ENCODE measurements at regions of chr17 and their contacts with region 1.

Region 1: GRCh38 chr17:16363749-16364536 is 10.7 kb upstream of the CENPV start:
- DNase-seq: peak; percentile 48 to 69
- ATAC-seq: peak; percentile 82 to 91
- H3K4me3 ChIP-seq: no peak overlapping the region
- H3K27ac ChIP-seq: peak overlapping the region in 3 of 4 donors; percentile 25 to 56 (median 39)
- H3K4me1 ChIP-seq: peaks cover 0 to 6% of the 10 kb centered on the region in 2 donors
- H3K27me3 ChIP-seq: no peaks in the 10 kb centered on the region
- CTCF ChIP-seq: peak; percentile 79 to 95 (median 89)
- POLR2A ChIP-seq: no peak

Region 2: GRCh38 chr17:16380640-16381495 is 16.9 kb after region 1 on chr17 and contains the start of gene UBB:
- in situ Hi-C with region 1: no loop called
- intact Hi-C with region 1: loop called (anchors 2 kb)
- DNase-seq: peak; percentile 97 to 98
- ATAC-seq: peak; percentile 94 to 95
- H3K4me3 ChIP-seq: peak within 1 kb of the TSS; percentile 77 to 85 (median 78)
- H3K27ac ChIP-seq: peak within 1 kb of the TSS; percentile 85 to 94 (median 91)
- H3K4me1 ChIP-seq: peaks cover 37 to 39% of the 10 kb centered on the region in 2 donors
- H3K27me3 ChIP-seq: no peaks in the 10 kb centered on the region
- CTCF ChIP-seq: peak in 3 of 5 experiments; percentile 15 to 28 (median 18)
- POLR2A ChIP-seq: peak; percentile 95 to 97
- total RNA-seq, gene UBB: 1,099 to 1,543 (median 1,420) TPM

Region 3: GRCh38 chr17:16415031-16415924 is 51.3 kb after region 1 on chr17 and contains the start of gene TRPV2:
- in situ Hi-C with region 1: no loop called
- intact Hi-C with region 1: loop called (anchors 1 kb)
- DNase-seq: no peak
- ATAC-seq: peak; percentile 20 to 34
- H3K4me3 ChIP-seq: peak within 1 kb of the TSS; percentile 55 to 64 (median 58)
- H3K27ac ChIP-seq: peak within 1 kb of the TSS; percentile 73 to 86 (median 82)
- H3K4me1 ChIP-seq: peaks cover 6 to 10% of the 10 kb centered on the region in 2 donors
- H3K27me3 ChIP-seq: no peaks in the 10 kb centered on the region
- CTCF ChIP-seq: peak; percentile 18 to 44 (median 39)
- POLR2A ChIP-seq: no peak
- total RNA-seq, gene TRPV2: 2.9 to 4.4 (median 3.4) TPM

Region 4: DNA sequence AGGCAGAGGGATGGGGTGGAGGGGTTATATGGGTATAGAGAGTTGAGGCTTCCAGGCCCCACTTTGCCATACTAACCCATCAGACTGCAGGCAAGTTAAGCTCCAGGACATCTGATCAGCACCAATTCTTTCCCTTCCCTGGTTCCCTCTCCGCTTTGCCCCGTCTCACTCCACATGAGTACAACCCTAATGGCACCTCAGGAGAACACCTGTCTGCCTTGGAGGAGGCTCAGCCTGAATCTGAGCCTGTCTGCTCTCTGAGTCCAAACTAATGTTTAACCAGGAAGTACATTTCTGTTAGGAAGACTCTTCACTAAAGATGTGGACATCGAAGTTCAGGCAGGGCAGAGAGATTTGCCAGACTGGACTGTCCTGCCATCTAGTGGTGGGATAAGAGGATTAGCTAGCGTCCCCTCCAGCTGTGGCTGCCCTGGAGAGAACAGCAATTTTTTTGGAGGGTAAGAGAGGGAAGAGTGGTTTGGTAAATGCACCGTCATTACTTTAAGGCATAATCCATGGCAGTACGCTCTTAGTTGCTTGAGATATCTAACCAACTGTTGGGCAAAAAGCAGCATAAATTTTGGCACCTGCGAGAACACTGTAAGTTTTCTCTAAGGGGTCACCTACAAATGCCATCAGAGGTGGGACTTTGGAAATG is 157.3 kb after region 1 on chr17:
- in situ Hi-C with region 1: loop called (anchors 5 to 25 kb)
- intact Hi-C with region 1: loop called (anchors 1 kb)
- DNase-seq: peak; percentile 60 to 72
- ATAC-seq: peak; percentile 98 to 99
- H3K4me3 ChIP-seq: no peak overlapping the region
- H3K27ac ChIP-seq: no peak overlapping the region
- H3K4me1 ChIP-seq: peaks cover 0 to 6% of the 10 kb centered on the region in 2 donors
- H3K27me3 ChIP-seq: peaks cover 0 to 18% (median 14%) of the 10 kb centered on the region in 3 donors
- CTCF ChIP-seq: peak; percentile 85 to 96 (median 90)
- POLR2A ChIP-seq: no peak